GM18951 (cell line): ENCODE measurements at regions of chr3 and their contacts with region 1.

Region 1: DNA sequence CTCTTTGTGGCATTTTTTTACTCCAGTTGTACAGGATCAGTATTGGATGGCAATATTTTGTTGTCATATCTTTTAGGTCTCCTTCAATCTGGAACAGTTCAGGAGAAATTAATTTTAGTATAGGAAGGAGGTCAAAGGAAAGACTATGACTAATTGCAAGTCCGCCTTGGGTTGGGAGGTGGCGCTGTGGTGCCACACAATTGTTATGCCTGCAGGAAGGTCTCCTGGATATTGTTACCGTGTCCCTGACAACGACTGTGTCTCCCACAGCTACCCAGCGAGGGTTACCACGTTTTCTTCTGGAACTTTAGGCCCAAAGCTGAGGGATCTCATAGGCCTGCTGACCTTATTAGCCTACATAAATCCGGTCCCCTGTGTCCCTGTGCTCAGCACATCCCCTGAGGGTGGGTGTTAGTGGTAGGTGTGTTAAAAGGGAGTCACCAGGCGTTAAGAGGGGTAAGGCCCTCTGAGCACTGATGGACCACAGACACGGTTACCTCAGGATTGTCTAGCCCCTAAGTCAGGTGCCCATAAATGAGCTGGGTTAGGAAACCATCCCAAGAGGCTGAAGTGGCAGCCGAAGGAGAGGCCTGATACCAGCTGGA is 31.5 kb downstream of the KCNAB1 start:
- POLR2A ChIP-seq: no peak

Region 2: GRCh38 chr3:156382458-156383346 is 230.8 kb after region 1 on chr3:
- in situ Hi-C with region 1: loop called (anchors 25 kb)
- POLR2A ChIP-seq: no peak

Region 3: GRCh38 chr3:156509189-156510174 is 357.6 kb after region 1 on chr3:
- in situ Hi-C with region 1: loop called (anchors 25 kb)
- POLR2A ChIP-seq: no peak

Region 4: GRCh38 chr3:156674046-156674910 is 522.4 kb after region 1 on chr3 and contains the start of gene TIPARP:
- in situ Hi-C with region 1: loop called (anchors 25 kb)
- POLR2A ChIP-seq: peak; percentile 99

Region 5: GRCh38 chr3:157130467-157131251 is 978.7 kb after region 1 on chr3:
- in situ Hi-C with region 1: loop called (anchors 25 kb)
- POLR2A ChIP-seq: no peak